ENCODE measurements at regions of chr3 and their contacts with region 1.

Region 1: DNA sequence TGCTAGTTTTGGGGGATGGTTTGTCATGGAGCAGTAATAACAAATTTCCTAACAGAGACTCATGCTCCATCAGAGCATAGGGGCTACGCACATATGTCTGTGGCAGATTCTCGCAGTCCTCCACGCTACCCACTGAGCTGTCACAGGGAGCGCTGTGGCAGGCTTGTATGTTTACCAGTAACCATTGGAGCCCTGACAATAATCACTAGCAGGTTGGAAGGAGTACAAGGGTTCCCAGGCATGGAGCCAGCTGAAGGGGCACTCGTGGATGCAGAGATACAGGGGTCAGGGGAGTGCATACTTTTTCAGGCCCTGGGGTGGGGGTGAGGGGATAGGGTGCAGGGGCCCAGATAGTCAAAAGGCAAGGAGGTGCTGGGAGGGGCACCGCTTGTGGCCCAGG is 7.9 kb upstream of the GP9 start:
- DNase-seq: peak; percentile 70 to 83
- ATAC-seq: peak; percentile 74 to 94 (median 88)
- H3K4me3 ChIP-seq: no peak overlapping the region
- H3K27ac ChIP-seq: peak overlapping the region in 9 of 10 donors; percentile 22 to 90 (median 77)
- H3K4me1 ChIP-seq: peaks cover 9 to 27% (median 19%) of the 10 kb centered on the region in 9 donors
- H3K27me3 ChIP-seq: no peaks in the 10 kb centered on the region
- CTCF ChIP-seq: peak in 2 of 9 donors; percentile 22 to 26

Region 2: DNA sequence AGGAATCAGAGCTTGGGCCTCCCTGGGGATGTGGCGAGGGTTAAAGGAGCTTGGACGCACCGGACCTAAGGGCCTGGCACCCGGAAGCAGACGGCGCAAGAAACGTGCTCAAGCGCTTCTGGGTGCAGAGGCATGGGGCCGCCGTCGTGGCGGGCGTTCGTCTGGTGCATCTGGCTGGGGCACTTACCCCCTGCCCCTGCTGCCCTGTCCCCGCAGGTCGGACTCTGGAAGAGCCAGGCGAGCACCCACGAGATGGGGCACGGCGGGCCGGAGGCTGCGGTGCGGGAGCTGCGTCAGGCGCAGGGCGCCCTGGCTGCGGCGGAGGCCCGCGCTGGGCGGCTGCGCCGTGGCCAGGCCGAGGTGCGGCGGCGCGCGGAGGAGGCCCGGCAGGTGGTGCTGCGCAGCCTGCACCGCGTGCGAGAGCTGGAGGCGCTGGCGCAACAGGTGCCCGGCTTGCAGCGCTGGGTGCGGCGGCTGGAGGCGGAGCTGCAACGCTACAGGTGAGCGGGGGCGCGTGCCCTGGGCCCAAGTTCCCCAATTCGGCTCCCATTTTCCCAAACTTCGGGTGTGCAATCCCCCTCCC is 49.0 kb before region 1 on chr3:
- intact Hi-C with region 1: loop called in 1 of 10 experiments (anchors 5 kb)
- DNase-seq: peak in 1 of 2 donors; percentile 36
- ATAC-seq: peak in 1 of 8 donors; percentile 16
- H3K4me3 ChIP-seq: peak overlapping the region in 9 of 10 donors; percentile 12 to 85 (median 77)
- H3K27ac ChIP-seq: peak overlapping the region in 2 of 10 donors; percentile 30 to 85
- H3K4me1 ChIP-seq: peaks cover 3 to 85% (median 57%) of the 10 kb centered on the region in 9 donors
- H3K27me3 ChIP-seq: peaks cover 0 to 64% (median 32%) of the 10 kb centered on the region in 7 donors
- CTCF ChIP-seq: peak in 4 of 9 donors; percentile 2 to 42 (median 15)

Region 3: GRCh38 chr3:129087138-129087702 is 34.5 kb after region 1 on chr3:
- intact Hi-C with region 1: loop called in 1 of 10 experiments (anchors 5 kb)
- DNase-seq: peak; percentile 33 to 54
- ATAC-seq: peak; percentile 43 to 84 (median 75)
- H3K4me3 ChIP-seq: no peak overlapping the region
- H3K27ac ChIP-seq: peak overlapping the region; percentile 55 to 93 (median 82)
- H3K4me1 ChIP-seq: peaks cover 4 to 13% (median 8%) of the 10 kb centered on the region in 9 donors
- H3K27me3 ChIP-seq: no peaks in the 10 kb centered on the region
- CTCF ChIP-seq: no peak

Region 4: GRCh38 chr3:129119365-129120100 is 66.9 kb after region 1 on chr3:
- intact Hi-C with region 1: loop called in 2 of 10 experiments (anchors 5 to 10 kb)
- DNase-seq: no peak
- ATAC-seq: no peak
- H3K4me3 ChIP-seq: peak overlapping the region; percentile 73 to 97 (median 90)
- H3K27ac ChIP-seq: peak overlapping the region in 9 of 10 donors; percentile 45 to 98 (median 94)
- H3K4me1 ChIP-seq: peaks cover 12 to 60% (median 37%) of the 10 kb centered on the region in 9 donors
- H3K27me3 ChIP-seq: no peaks in the 10 kb centered on the region
- CTCF ChIP-seq: no peak

Region 5: DNA sequence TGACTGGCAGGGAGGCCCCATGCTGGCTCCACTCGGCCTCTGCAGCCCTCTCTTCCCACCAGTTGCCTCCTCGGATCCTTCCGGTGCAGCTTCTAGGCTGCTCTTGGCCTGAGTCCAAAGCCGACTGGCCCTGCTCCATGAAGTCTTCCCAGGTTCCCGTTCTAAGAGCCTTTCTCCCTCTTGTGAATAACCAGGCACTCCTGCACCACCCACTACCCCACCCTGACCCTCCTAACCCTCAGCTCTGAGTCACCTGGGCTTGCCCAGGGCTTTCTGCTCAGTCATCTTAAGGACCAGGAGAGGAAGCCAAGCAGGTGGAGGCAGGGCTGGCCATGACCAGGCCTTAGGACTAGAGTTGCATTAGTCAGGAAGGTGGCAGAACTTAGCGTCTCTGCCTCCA is 159.1 kb after region 1 on chr3:
- intact Hi-C with region 1: no loop called
- DNase-seq: peak; percentile 46 to 71
- ATAC-seq: peak in 7 of 8 donors; percentile 62 to 89 (median 76)
- H3K4me3 ChIP-seq: no peak overlapping the region
- H3K27ac ChIP-seq: peak overlapping the region in 3 of 10 donors; percentile 15 to 64 (median 15)
- H3K4me1 ChIP-seq: peaks cover 0 to 20% (median 11%) of the 10 kb centered on the region in 9 donors
- H3K27me3 ChIP-seq: no peaks in the 10 kb centered on the region
- CTCF ChIP-seq: no peak